ENCODE measurements at regions of chr3 and their contacts with region 1.

Region 1: DNA sequence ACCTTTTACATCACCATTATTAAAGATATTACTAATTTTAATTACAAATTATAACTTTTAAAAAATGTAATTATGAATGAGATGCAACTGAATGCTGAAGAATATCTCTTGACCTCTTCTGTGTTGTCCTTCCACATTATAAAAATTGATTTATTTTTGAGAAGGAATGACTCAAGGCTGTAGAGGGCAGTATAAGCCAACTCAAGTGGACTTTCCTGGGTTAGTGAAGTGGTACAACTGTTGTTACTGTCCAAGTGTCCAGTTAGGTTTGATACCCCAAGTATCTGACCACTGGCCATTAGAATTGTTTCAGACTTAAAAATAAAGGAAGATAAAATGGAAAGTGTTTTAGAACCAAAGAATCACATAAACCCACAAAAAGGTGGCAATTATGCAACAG is 51.9 kb downstream of the BBX start:
- DNase-seq: peak; percentile 8 to 34 (median 12)
- ATAC-seq: peak; percentile 77
- H3K4me3 ChIP-seq: no peak overlapping the region
- H3K27ac ChIP-seq: no peak overlapping the region
- H3K4me1 ChIP-seq: no peaks in the 10 kb centered on the region
- H3K27me3 ChIP-seq: no peaks in the 10 kb centered on the region
- CTCF ChIP-seq: peak; percentile 25 to 56 (median 35); a peak in 3 of 6 replicates
- EP300 ChIP-seq: no peak
- POLR2A ChIP-seq: no peak
- RAD21 ChIP-seq: peak; percentile 36 to 56; a peak in 3 of 4 replicates

Region 2: GRCh38 chr3:107512108-107512507 is 62.5 kb before region 1 on chr3:
- CTCF ChIA-PET with region 1: no interaction called
- POLR2A ChIA-PET with region 1: no interaction called
- in situ Hi-C with region 1: no loop called
- intact Hi-C with region 1: no loop called
- DNase-seq: no peak
- ATAC-seq: no peak
- H3K4me3 ChIP-seq: no peak overlapping the region
- H3K27ac ChIP-seq: no peak overlapping the region
- H3K4me1 ChIP-seq: no peaks in the 10 kb centered on the region
- H3K27me3 ChIP-seq: no peaks in the 10 kb centered on the region; a peak in 1 of 5 replicates
- CTCF ChIP-seq: peak in 1 of 3 experiments; percentile 21; a peak in 2 of 6 replicates
- EP300 ChIP-seq: no peak
- POLR2A ChIP-seq: no peak
- RAD21 ChIP-seq: peak in 1 of 2 experiments; percentile 31; a peak in 1 of 4 replicates

Region 3: GRCh38 chr3:107660306-107660976 is 85.8 kb after region 1 on chr3:
- CTCF ChIA-PET with region 1: no interaction called
- POLR2A ChIA-PET with region 1: no interaction called
- in situ Hi-C with region 1: no loop called
- intact Hi-C with region 1: loop called (anchors 10 kb)
- DNase-seq: no peak
- ATAC-seq: no peak
- H3K4me3 ChIP-seq: no peak overlapping the region
- H3K27ac ChIP-seq: no peak overlapping the region
- H3K4me1 ChIP-seq: no peaks in the 10 kb centered on the region
- H3K27me3 ChIP-seq: no peaks in the 10 kb centered on the region
- CTCF ChIP-seq: peak in 2 of 3 experiments; percentile 3 to 56; a peak in 3 of 6 replicates
- EP300 ChIP-seq: no peak
- POLR2A ChIP-seq: no peak
- RAD21 ChIP-seq: peak in 1 of 2 experiments; percentile 23; a peak in 1 of 4 replicates

Region 4: GRCh38 chr3:107740992-107741896 is 166.6 kb after region 1 on chr3:
- CTCF ChIA-PET with region 1: interaction called, 6 read pairs
- POLR2A ChIA-PET with region 1: no interaction called
- in situ Hi-C with region 1: no loop called
- intact Hi-C with region 1: loop called (anchors 2 kb)
- DNase-seq: peak in 1 of 4 experiments; percentile 3
- ATAC-seq: no peak
- H3K4me3 ChIP-seq: no peak overlapping the region
- H3K27ac ChIP-seq: no peak overlapping the region
- H3K4me1 ChIP-seq: no peaks in the 10 kb centered on the region
- H3K27me3 ChIP-seq: no peaks in the 10 kb centered on the region
- CTCF ChIP-seq: peak in 2 of 3 experiments; percentile 18 to 57; a peak in 3 of 6 replicates
- EP300 ChIP-seq: no peak
- POLR2A ChIP-seq: no peak
- RAD21 ChIP-seq: peak; percentile 52 to 57

Region 5: DNA sequence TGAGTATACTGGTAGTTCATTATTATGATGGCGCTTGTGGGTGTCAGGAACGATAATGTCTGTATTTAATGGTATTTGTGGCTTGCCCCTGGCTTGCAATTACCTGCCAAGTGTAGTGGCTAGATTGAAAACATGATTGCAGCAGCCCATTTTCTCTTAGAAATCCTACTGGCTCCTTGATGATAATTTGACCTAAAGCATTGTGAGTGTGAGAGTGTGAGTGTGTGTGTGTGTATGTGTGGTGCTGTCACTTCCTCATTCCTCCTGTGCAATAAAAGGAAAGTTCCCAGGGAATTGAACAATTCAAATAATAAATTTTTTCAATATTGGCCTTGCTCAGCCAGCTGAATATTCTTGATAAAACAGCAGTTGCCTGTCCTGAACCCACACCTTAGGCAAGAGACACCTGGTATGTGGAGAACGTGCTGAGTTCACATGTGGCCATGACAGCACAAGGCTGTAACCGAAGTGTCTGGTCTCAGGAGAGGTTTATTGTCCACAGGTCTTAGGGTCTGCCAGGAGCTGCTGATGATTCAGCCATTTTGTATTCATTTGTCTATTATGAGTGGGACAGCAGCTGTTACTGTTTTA is 322.9 kb after region 1 on chr3:
- CTCF ChIA-PET with region 1: no interaction called
- POLR2A ChIA-PET with region 1: no interaction called
- in situ Hi-C with region 1: no loop called
- intact Hi-C with region 1: no loop called
- DNase-seq: no peak
- ATAC-seq: no peak
- H3K4me3 ChIP-seq: no peak overlapping the region
- H3K27ac ChIP-seq: no peak overlapping the region
- H3K4me1 ChIP-seq: peaks cover 0 to 7% of the 10 kb centered on the region in 2 experiments; a peak in 2 of 5 replicates
- H3K27me3 ChIP-seq: no peaks in the 10 kb centered on the region
- CTCF ChIP-seq: no peak
- EP300 ChIP-seq: no peak
- POLR2A ChIP-seq: no peak
- RAD21 ChIP-seq: no peak